WTC11 (cell line): ENCODE measurements at regions of chr13 and their contacts with region 1.

Region 1: GRCh38 chr13:24323036-24323738 is 13.8 kb downstream of the C1QTNF9 start:
- DNase-seq: no peak
- ATAC-seq: no peak
- H3K4me3 Mint-ChIP-seq: no peak overlapping the region
- H3K27ac Mint-ChIP-seq: no peak overlapping the region
- H3K4me1 Mint-ChIP-seq: no peaks in the 10 kb centered on the region
- H3K27me3 Mint-ChIP-seq: peaks cover 14% of the 10 kb centered on the region
- CTCF ChIP-seq: no peak

Region 2: GRCh38 chr13:24135674-24136300 is 187.4 kb before region 1 on chr13:
- CTCF ChIA-PET with region 1: no interaction called
- POLR2A ChIA-PET with region 1: no interaction called
- DNase-seq: no peak
- ATAC-seq: no peak
- H3K4me3 Mint-ChIP-seq: no peak overlapping the region
- H3K27ac Mint-ChIP-seq: no peak overlapping the region
- H3K4me1 Mint-ChIP-seq: peaks cover 19% of the 10 kb centered on the region
- H3K27me3 Mint-ChIP-seq: no peaks in the 10 kb centered on the region; the same call in 1 of the 2 replicates
- CTCF ChIP-seq: no peak

Region 3: GRCh38 chr13:24338721-24339120 is 15.5 kb after region 1 on chr13:
- CTCF ChIA-PET with region 1: no interaction called
- POLR2A ChIA-PET with region 1: no interaction called
- DNase-seq: no peak
- ATAC-seq: no peak
- H3K4me3 Mint-ChIP-seq: no peak overlapping the region
- H3K27ac Mint-ChIP-seq: no peak overlapping the region
- H3K4me1 Mint-ChIP-seq: no peaks in the 10 kb centered on the region
- H3K27me3 Mint-ChIP-seq: no peaks in the 10 kb centered on the region; the same call in 1 of the 2 replicates
- CTCF ChIP-seq: no peak

Region 4: DNA sequence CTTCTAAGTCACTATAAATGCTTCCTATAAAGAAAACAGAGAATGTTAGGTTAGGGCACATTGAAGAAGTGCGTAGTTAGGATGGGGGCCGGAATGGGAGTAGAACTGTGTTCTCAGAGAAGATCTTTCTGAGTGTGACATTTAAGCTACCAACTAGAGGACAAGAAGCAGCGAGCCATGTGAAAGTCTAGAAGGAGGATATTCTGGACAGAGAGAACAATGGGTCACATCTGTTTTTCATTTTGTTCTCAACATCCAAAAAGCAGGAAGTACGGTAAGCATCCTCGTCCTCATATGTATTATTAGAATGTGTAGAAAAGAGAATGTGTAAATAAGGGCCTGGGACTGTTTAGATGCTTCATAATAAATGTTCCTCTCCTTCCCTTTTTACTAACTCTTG is 233.9 kb after region 1 on chr13:
- CTCF ChIA-PET with region 1: interaction called, 14 read pairs
- POLR2A ChIA-PET with region 1: no interaction called
- DNase-seq: no peak
- ATAC-seq: no peak
- H3K4me3 Mint-ChIP-seq: no peak overlapping the region
- H3K27ac Mint-ChIP-seq: no peak overlapping the region
- H3K4me1 Mint-ChIP-seq: no peaks in the 10 kb centered on the region
- H3K27me3 Mint-ChIP-seq: no peaks in the 10 kb centered on the region; the same call in none of the 2 replicates
- CTCF ChIP-seq: no peak